Psoas muscle (tissue), 8 donors: ENCODE measurements at regions of chr6 and their contacts with region 1.

Region 1: DNA sequence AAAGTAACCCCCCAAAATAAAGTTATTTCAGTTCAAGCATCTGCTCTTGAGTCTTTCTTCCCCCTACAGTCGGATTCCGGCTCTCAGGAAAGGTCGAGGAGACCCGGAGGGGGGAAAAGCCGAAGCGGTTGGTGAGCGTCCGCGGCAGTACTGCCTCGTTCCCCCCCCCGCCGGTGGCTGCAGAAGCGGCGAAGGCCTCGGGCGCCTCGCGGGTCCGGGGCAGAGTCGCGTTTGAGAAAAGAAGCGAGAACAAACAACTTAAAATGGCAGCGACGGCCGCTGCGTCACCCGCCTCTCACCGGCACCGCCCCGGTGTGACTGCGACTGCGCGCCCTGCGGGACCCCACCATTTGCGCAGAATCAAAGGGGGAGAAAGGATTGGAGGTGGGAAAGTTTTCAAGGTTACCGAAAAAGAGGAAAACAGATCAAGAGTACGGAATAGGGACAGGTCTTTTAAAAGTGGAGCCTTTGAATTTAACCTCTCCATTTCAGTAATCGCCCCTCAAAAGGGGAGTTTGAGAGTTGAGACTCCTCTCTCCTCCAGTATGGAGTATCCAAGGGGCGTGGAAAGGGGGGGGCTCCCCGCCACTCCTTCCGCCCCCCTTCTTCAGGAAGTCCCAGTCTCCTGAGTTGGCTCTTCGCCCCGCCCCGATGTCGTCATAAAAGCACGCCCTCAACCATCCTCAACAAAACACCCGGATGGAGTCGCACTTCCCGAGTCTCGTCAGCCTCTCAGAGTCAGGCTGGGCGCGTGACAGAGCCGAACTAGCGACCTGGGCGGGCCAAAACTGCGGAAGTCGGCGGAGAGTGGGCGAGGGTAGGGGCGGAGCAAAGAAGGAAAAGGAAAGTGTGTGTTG is 1.9 kb upstream of the C6orf62 start:
- DNase-seq: peak; percentile 100
- ATAC-seq: peak; percentile 89 to 94 (median 90)
- H3K4me3 ChIP-seq: peak overlapping the region; percentile 88
- H3K27ac ChIP-seq: peak overlapping the region; percentile 100
- H3K4me1 ChIP-seq: peaks cover 20% of the 10 kb centered on the region
- H3K27me3 ChIP-seq: no peaks in the 10 kb centered on the region
- CTCF ChIP-seq: no peak

Region 2: GRCh38 chr6:23696992-23697391 is 1023.8 kb before region 1 on chr6:
- intact Hi-C with region 1: no loop called
- DNase-seq: no peak
- ATAC-seq: no peak
- H3K4me3 ChIP-seq: no peak overlapping the region
- H3K27ac ChIP-seq: no peak overlapping the region
- H3K4me1 ChIP-seq: no peaks in the 10 kb centered on the region
- H3K27me3 ChIP-seq: no peaks in the 10 kb centered on the region
- CTCF ChIP-seq: no peak

Region 3: GRCh38 chr6:24574809-24575208 is 146.0 kb before region 1 on chr6:
- intact Hi-C with region 1: no loop called
- DNase-seq: no peak
- ATAC-seq: no peak
- H3K4me3 ChIP-seq: no peak overlapping the region
- H3K27ac ChIP-seq: no peak overlapping the region
- H3K4me1 ChIP-seq: no peaks in the 10 kb centered on the region
- H3K27me3 ChIP-seq: no peaks in the 10 kb centered on the region
- CTCF ChIP-seq: no peak

Region 4: DNA sequence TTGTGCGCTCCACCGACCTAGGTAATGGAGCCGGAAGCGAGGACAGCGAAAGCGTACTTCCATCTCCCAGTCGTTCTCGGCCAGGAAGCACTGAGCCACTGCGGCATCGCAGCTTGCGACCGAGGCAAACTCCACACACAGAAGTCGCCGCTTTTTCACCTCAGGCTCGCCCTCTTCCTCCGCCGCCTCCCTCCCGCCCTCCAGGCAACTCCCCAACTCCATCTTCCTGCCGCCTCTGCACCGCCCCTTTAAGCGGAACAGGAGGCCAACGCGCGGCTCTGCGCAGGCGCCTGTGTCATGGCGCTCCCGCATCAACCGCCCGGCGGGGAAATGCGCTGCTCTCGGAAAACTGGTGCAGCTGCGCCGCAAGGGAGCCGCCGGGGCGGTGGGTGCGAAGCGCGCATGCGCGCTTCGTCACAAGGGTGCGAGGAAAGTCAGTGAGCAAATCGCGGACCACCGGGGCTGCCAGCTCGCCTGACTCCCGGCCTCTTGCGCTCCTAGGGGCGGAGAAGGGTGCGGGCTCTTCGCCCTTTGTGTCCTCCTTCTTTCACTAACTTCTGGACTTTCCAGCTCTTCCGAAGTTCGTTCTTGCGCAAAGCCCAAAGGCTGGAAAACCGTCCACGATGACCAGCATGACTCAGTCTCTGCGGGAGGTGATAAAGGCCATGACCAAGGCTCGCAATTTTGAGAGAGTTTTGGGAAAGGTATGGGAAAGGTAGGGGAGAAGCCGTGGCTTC is 54.0 kb before region 1 on chr6 and contains the starts of genes ACOT13 and TDP2:
- intact Hi-C with region 1: loop called (anchors 1 to 5 kb)
- DNase-seq: peak; percentile 96 to 99
- ATAC-seq: peak; percentile 99 to 100 (median 100)
- H3K4me3 ChIP-seq: peak within 1 kb of the TSS; percentile 94
- H3K27ac ChIP-seq: peak within 1 kb of the TSS; percentile 92
- H3K4me1 ChIP-seq: peaks cover 33% of the 10 kb centered on the region
- H3K27me3 ChIP-seq: no peaks in the 10 kb centered on the region
- CTCF ChIP-seq: peak; percentile 59
- total RNA-seq, gene ACOT13: 36.3 to 50.7 (median 37.6) TPM
- total RNA-seq, gene TDP2: 16.3 to 22.1 (median 19.8) TPM

Region 5: GRCh38 chr6:24774696-24775519 is 54.1 kb after region 1 on chr6 and contains the start of gene GMNN:
- intact Hi-C with region 1: loop called (anchors 5 kb)
- DNase-seq: peak; percentile 100
- ATAC-seq: peak; percentile 98 to 99 (median 98)
- H3K4me3 ChIP-seq: peak within 1 kb of the TSS; percentile 95
- H3K27ac ChIP-seq: peak within 1 kb of the TSS; percentile 90
- H3K4me1 ChIP-seq: peaks cover 12% of the 10 kb centered on the region
- H3K27me3 ChIP-seq: no peaks in the 10 kb centered on the region
- CTCF ChIP-seq: no peak
- total RNA-seq, gene GMNN: 3.5 to 4.2 (median 3.9) TPM